ENCODE measurements at regions of chr11 and their contacts with region 1.

Region 1: GRCh38 chr11:125141686-125142535 is 22.6 kb upstream of the PKNOX2 start:
- DNase-seq: no peak
- ATAC-seq: peak; percentile 98
- H3K4me3 ChIP-seq: no peak overlapping the region
- H3K27ac ChIP-seq: no peak overlapping the region
- H3K4me1 ChIP-seq: no peaks in the 10 kb centered on the region
- H3K27me3 ChIP-seq: peaks cover 0 to 2% of the 10 kb centered on the region in 2 experiments; a peak in 1 of 4 replicates
- CTCF ChIP-seq: peak; percentile 88 to 94 (median 92)
- EP300 ChIP-seq: no peak
- POLR2A ChIP-seq: no peak
- RAD21 ChIP-seq: peak; percentile 78

Region 2: GRCh38 chr11:124953753-124954589 is 187.9 kb before region 1 on chr11 and contains the start of gene CCDC15:
- CTCF ChIA-PET with region 1: interaction called, 61 read pairs
- POLR2A ChIA-PET with region 1: no interaction called
- RAD21 ChIA-PET with region 1: interaction called, 32 read pairs
- SMC1A ChIA-PET with region 1: interaction called, 52 read pairs
- in situ Hi-C with region 1: loop called (anchors 10 kb)
- intact Hi-C with region 1: no loop called
- DNase-seq: peak; percentile 87
- ATAC-seq: peak; percentile 99
- H3K4me3 ChIP-seq: peak within 1 kb of the TSS; percentile 79
- H3K27ac ChIP-seq: peak within 1 kb of the TSS; percentile 54
- H3K4me1 ChIP-seq: no peaks in the 10 kb centered on the region; the same call in 1 of the 2 replicates
- H3K27me3 ChIP-seq: no peaks in the 10 kb centered on the region
- CTCF ChIP-seq: no peak
- EP300 ChIP-seq: 0 out of 4 replicates have a peak, but pooled peaks of 1 of the 2 experiments have one; percentile 18
- POLR2A ChIP-seq: peak; percentile 99
- RAD21 ChIP-seq: no peak
- polyA plus RNA-seq, gene CCDC15: 2.0 to 2.8 TPM

Region 3: DNA sequence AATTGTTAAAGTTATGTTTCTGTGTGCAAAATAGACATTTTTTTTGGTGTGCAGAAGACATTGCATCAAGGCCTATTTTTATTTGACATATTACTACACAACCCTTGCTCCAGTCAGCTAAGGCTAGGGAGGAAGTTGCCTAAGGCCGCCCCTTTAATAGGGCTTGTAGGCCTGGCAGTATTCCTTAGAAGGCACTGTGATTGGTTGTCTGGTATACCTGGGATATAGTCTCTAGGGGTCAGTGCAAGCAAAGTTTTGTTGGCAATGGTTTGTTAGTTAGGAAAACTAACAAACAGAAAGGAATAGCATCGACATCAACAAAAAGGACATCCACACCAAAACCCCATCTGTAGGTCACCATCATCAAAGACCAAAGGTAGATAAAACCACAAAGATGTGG is 171.0 kb before region 1 on chr11:
- CTCF ChIA-PET with region 1: interaction called, 44 read pairs
- POLR2A ChIA-PET with region 1: no interaction called
- RAD21 ChIA-PET with region 1: interaction called, 18 read pairs
- SMC1A ChIA-PET with region 1: interaction called, 9 read pairs
- in situ Hi-C with region 1: no loop called
- intact Hi-C with region 1: no loop called
- DNase-seq: no peak
- ATAC-seq: peak; percentile 57
- H3K4me3 ChIP-seq: no peak overlapping the region
- H3K27ac ChIP-seq: no peak overlapping the region
- H3K4me1 ChIP-seq: no peaks in the 10 kb centered on the region
- H3K27me3 ChIP-seq: no peaks in the 10 kb centered on the region
- CTCF ChIP-seq: peak in 1 of 3 experiments; percentile 29; a peak in 1 of 6 replicates
- EP300 ChIP-seq: no peak
- POLR2A ChIP-seq: no peak
- RAD21 ChIP-seq: peak; percentile 39; the same call in 1 of the 2 replicates

Region 4: DNA sequence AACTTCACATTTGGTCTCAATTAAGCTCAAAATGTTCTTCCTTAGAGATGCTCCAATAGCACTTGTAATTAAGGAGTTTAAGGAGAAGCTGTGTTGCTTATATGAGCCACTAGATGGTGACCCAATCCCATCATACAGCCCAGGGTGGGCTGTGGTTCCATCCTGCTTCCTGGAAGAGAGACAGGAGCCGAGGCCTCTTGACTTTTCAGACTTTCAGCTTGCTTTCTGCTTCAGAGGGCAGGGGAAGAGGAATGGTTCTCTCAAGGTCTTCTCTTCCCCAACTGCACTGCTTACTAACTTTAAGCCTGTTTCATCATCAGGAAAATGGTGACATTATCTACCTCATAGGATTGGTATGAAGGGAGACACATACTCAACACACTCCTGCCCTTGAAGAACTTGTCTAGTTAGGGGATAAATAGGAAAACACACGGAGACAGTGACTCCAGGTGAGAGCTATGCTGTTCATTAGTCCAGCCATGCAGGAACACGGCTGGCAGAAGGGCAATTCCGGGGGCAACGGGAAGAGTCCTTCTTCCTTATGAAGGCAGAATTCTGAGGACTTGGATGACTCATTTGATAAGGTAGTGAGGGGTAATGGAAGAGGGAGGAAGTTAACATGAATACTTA is 50.5 kb before region 1 on chr11:
- CTCF ChIA-PET with region 1: interaction called, 100 read pairs
- POLR2A ChIA-PET with region 1: no interaction called
- RAD21 ChIA-PET with region 1: interaction called, 44 read pairs
- SMC1A ChIA-PET with region 1: interaction called, 46 read pairs
- in situ Hi-C with region 1: no loop called
- intact Hi-C with region 1: loop called (anchors 1 kb)
- DNase-seq: no peak
- ATAC-seq: peak; percentile 86
- H3K4me3 ChIP-seq: no peak overlapping the region
- H3K27ac ChIP-seq: no peak overlapping the region
- H3K4me1 ChIP-seq: no peaks in the 10 kb centered on the region
- H3K27me3 ChIP-seq: no peaks in the 10 kb centered on the region
- CTCF ChIP-seq: peak; percentile 43 to 66 (median 54); a peak in 4 of 6 replicates
- EP300 ChIP-seq: no peak
- POLR2A ChIP-seq: no peak
- RAD21 ChIP-seq: peak; percentile 80

Region 5: DNA sequence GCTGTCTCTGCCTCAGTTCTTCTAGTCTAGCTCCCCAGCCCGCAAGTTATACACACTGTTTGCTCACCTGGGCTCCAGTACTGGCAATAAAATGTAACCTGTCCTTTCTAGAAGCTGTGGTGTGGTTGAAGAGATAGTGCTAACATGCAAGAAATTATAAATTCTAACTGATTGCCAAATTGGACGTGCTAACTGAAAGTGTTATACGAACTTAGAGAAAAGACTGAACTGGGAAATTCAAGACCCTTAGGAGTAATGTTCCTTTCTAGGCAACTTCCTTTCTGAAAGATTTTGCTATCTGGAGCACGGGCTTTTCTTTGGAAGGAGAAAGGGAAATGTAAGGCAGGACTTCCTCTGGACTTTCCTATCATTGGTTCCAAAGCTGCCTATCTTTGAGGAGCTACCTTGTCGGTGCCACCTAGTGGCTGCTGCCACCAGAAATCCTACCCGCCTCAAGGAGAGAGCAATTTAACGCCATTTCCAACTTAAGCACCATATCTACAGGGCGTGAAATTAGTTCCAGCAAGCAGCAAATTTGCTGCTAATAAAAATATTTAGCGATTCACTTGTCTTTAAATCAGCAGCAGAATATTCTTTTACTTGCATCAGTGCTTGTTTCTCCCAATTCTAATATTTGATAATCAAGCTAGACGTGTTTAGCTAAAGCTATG is 17.8 kb before region 1 on chr11:
- CTCF ChIA-PET with region 1: interaction called, 24 read pairs
- POLR2A ChIA-PET with region 1: no interaction called
- RAD21 ChIA-PET with region 1: interaction called, 5 read pairs
- SMC1A ChIA-PET with region 1: interaction called, 9 read pairs
- in situ Hi-C with region 1: no loop called
- intact Hi-C with region 1: no loop called
- DNase-seq: no peak
- ATAC-seq: peak; percentile 79
- H3K4me3 ChIP-seq: no peak overlapping the region
- H3K27ac ChIP-seq: no peak overlapping the region
- H3K4me1 ChIP-seq: no peaks in the 10 kb centered on the region
- H3K27me3 ChIP-seq: no peaks in the 10 kb centered on the region; a peak in 2 of 4 replicates
- CTCF ChIP-seq: peak; percentile 27 to 61 (median 38); a peak in 4 of 6 replicates
- EP300 ChIP-seq: no peak
- POLR2A ChIP-seq: no peak
- RAD21 ChIP-seq: peak; percentile 32